Calu3 (cell line): ENCODE measurements at regions of chr14 and their contacts with region 1.

Region 1: DNA sequence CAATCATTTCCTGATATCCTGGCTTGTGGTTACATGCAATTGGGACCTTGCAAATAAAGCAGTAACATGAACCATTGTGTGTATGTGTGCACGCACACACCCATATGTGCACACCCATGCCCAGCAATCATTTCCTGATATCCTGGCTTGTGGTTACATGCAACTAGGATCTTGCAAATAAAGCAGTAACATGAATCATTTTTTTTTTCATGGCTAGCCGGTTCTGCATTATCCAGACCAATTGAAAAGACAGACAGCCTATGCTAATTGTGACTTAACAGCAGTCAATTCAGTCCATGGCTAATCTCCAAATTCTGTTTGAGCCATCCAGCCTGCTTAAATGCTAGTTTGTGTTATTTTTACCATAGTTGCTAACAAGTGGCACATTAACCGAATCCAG is 134.3 kb downstream of the TTC7B start:
- DNase-seq: no peak
- H3K4me3 Mint-ChIP-seq: no peak overlapping the region
- H3K27ac Mint-ChIP-seq: no peak overlapping the region
- H3K4me1 Mint-ChIP-seq: no peaks in the 10 kb centered on the region
- H3K27me3 Mint-ChIP-seq: no peaks in the 10 kb centered on the region
- CTCF ChIP-seq: no peak

Region 2: GRCh38 chr14:90599748-90600507 is 82.0 kb before region 1 on chr14:
- CTCF ChIA-PET with region 1: no interaction called
- intact Hi-C with region 1: loop called (anchors 10 kb)
- DNase-seq: peak; percentile 14
- H3K4me3 Mint-ChIP-seq: no peak overlapping the region
- H3K27ac Mint-ChIP-seq: peak overlapping the region; percentile 72
- H3K4me1 Mint-ChIP-seq: no peaks in the 10 kb centered on the region
- H3K27me3 Mint-ChIP-seq: no peaks in the 10 kb centered on the region
- CTCF ChIP-seq: no peak

Region 3: DNA sequence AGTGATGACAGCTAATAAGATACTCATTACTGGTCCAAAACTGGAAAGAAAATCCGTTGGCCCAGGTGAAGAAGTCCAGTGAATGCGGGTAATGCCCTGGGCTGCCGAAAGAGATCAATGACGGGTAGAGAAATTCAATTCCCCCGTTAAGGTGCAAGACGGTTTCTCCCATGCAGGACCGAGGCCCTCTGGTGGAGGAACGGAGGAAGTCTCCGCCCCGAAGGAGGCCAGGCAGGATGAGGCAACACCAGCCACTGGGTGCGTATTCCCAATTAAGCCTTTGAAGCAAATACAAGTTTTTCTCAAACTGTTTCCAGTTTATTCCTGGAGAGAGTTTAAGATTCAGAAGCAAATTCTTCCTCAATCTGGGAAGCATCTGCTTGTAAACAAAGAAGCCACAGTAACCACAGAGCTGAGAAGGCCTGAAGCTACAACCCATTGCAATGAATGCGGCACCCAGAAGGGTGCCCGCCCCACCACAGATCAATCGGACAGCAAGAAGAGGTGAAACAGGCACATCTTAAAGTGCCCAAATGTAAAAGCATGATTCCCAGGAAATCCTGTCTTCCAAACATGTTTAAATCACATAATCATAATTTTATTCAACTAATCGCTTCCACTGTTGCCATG is 15.8 kb after region 1 on chr14:
- CTCF ChIA-PET with region 1: no interaction called
- intact Hi-C with region 1: no loop called
- DNase-seq: peak; percentile 85
- H3K4me3 Mint-ChIP-seq: no peak overlapping the region
- H3K27ac Mint-ChIP-seq: no peak overlapping the region
- H3K4me1 Mint-ChIP-seq: no peaks in the 10 kb centered on the region
- H3K27me3 Mint-ChIP-seq: no peaks in the 10 kb centered on the region
- CTCF ChIP-seq: peak; percentile 76

Region 4: DNA sequence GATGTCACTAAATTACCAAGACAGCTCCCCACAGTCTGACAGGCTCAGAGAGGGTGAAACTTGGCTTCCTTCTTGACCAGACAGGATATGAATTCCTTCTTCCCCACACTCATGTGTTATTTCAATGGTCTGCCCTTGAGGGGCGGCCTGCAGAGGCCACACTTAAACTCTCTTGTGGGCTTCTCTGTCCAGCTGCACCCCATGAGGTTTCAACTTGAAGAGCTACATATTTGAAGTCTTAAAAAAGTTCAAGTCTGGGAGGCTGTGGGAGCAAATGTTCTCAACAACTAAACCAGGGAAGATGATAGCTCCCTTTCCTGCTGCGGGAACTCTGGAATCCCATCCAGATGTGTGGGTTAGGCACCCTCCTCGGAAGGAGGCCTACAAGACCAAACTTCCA is 36.0 kb after region 1 on chr14:
- CTCF ChIA-PET with region 1: no interaction called
- intact Hi-C with region 1: no loop called
- DNase-seq: no peak
- H3K4me3 Mint-ChIP-seq: no peak overlapping the region
- H3K27ac Mint-ChIP-seq: no peak overlapping the region
- H3K4me1 Mint-ChIP-seq: peaks cover 18% of the 10 kb centered on the region
- H3K27me3 Mint-ChIP-seq: no peaks in the 10 kb centered on the region
- CTCF ChIP-seq: no peak

Region 5: DNA sequence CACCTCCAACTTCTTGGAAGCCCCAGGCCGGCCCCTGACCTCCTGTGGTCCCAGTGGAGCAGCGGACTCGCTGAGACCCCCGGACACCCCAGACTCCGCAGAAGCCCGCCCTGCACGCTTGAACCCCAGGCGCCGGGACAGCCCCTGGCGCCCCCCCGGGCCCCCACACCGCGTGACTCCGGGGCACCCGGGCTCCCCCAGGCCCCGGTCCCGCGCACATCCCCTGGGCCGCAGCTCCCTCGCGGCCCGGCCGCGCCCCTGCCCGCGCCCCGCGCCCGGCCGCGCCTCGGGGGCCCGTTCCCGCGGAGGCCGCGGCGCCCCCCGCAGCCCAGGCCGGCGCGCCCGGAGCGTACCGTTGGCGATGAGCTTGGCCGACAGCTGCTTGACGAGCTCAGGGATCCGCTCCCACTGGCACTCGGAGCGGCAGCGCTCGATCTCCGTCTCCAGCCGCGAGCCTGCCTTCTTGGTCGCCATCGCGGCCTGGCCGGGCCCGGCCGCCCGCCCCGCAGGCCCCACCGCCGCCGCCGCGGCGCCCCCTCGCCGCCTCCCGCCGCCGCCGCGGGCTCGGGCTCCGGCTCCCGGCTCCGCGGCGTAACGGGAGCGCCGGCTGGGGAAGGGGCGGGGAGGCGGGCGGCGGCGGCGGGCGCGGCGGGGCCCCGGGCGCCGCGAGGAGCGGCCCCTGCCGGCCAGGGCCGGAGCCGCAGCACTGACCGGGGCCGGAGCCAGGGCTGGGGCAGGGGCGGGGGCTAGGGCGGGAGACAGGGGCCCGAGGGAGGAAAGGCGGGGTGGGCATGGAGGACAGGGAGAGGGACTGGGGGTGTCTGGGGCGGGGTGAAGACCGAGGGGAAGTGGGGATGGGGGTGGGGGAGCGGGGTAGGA is 134.1 kb after region 1 on chr14 and contains the start of gene TTC7B:
- CTCF ChIA-PET with region 1: no interaction called
- intact Hi-C with region 1: no loop called
- DNase-seq: peak; percentile 71
- H3K4me3 Mint-ChIP-seq: peak within 1 kb of the TSS; percentile 49
- H3K27ac Mint-ChIP-seq: no peak within 1 kb of the TSS
- H3K4me1 Mint-ChIP-seq: peaks cover 22% of the 10 kb centered on the region
- H3K27me3 Mint-ChIP-seq: peaks cover 25% of the 10 kb centered on the region
- CTCF ChIP-seq: no peak
- total RNA-seq, gene TTC7B: 9.6 and 13.2 TPM in 2 replicates